ENCODE measurements at regions of chr3 and their contacts with region 1.

Region 1: GRCh38 chr3:149969940-149970715 is 567 bp downstream of the PFN2 start:
- DNase-seq: peak; percentile 75
- ATAC-seq: peak; percentile 27
- H3K4me3 ChIP-seq: peak overlapping the region; percentile 79
- H3K27ac ChIP-seq: peak overlapping the region; percentile 86
- H3K4me1 ChIP-seq: peaks cover 31% of the 10 kb centered on the region
- H3K27me3 ChIP-seq: no peaks in the 10 kb centered on the region
- CTCF ChIP-seq: no peak

Region 2: GRCh38 chr3:150079029-150079739 is 109.1 kb after region 1 on chr3:
- CTCF ChIA-PET with region 1: interaction called, 4 read pairs
- POLR2A ChIA-PET with region 1: interaction called, 3 read pairs
- intact Hi-C with region 1: loop called (anchors 2 kb)
- DNase-seq: peak; percentile 91
- ATAC-seq: peak; percentile 74
- H3K4me3 ChIP-seq: no peak overlapping the region
- H3K27ac ChIP-seq: peak overlapping the region; percentile 84
- H3K4me1 ChIP-seq: peaks cover 59% of the 10 kb centered on the region
- H3K27me3 ChIP-seq: no peaks in the 10 kb centered on the region
- CTCF ChIP-seq: no peak

Region 3: GRCh38 chr3:150202711-150203110 is 232.6 kb after region 1 on chr3:
- CTCF ChIA-PET with region 1: no interaction called
- POLR2A ChIA-PET with region 1: no interaction called
- intact Hi-C with region 1: no loop called
- DNase-seq: no peak
- ATAC-seq: no peak
- H3K4me3 ChIP-seq: no peak overlapping the region
- H3K27ac ChIP-seq: no peak overlapping the region
- H3K4me1 ChIP-seq: no peaks in the 10 kb centered on the region
- H3K27me3 ChIP-seq: no peaks in the 10 kb centered on the region
- CTCF ChIP-seq: no peak

Region 4: DNA sequence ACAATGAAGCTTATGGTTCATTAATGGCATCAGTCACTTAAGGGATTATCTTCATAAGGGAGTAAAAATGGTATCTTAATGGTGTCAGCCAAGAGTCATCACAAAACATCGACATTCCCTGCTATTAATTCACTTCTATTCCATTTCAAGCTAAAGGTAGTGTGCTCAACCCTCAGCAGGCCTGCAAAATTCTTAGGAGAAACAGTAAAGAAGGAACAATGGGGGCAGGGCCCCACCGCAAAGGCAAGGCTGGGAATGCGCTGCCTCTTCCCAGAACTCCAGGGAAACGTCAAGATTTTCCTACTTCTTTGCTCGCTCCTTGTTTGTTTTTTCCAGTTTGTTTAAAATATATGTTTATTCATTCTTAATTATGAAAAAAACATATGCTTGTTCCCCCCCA is 250.7 kb after region 1 on chr3:
- CTCF ChIA-PET with region 1: interaction called, 4 read pairs
- POLR2A ChIA-PET with region 1: no interaction called
- intact Hi-C with region 1: loop called (anchors 1 kb)
- DNase-seq: no peak
- ATAC-seq: peak; percentile 22; the same call in 1 of the 2 replicates
- H3K4me3 ChIP-seq: peak overlapping the region; percentile 44; the same call in 1 of the 2 replicates
- H3K27ac ChIP-seq: no peak overlapping the region
- H3K4me1 ChIP-seq: 0 out of 2 replicates have a peak, but pooled peaks cover 3% of the 10 kb centered on the region
- H3K27me3 ChIP-seq: no peaks in the 10 kb centered on the region
- CTCF ChIP-seq: no peak

Region 5: DNA sequence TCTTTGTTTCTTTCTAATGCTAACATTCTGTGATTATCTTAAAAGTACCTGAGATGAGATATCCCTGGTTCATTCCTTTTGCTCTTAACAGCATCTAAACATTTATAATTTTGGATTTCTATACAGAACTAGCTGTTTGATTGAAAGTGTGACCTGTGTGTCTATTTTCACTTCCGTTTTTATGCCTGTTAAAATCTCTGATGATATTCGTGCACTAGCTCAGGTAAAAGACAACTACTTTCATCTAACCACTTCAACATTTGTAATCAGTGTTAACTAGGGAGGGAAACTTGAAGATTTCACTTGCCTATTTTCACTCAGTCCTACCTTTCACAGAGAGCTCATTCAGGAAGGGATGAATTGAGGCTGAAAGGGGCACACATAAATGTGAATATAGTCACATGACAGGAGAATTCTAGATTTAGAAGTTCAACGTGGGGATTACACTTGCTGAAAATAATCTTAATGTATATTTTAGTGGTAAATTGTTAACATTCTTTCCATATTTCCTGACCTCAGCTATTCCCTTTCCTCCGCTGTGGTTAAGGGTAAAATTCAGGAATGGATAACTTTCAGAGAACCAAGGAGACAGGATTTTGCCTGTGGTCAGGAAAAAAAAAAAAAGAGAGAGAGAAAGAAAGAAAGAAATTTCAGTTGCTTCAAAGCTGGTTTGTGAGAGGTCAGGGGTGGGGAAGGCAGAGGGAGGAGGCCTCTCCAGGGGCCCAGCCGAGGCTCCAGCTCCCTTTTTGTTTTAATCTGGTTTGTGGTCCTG is 278.2 kb after region 1 on chr3:
- CTCF ChIA-PET with region 1: no interaction called
- POLR2A ChIA-PET with region 1: no interaction called
- intact Hi-C with region 1: no loop called
- DNase-seq: peak; percentile 60
- ATAC-seq: no peak
- H3K4me3 ChIP-seq: no peak overlapping the region
- H3K27ac ChIP-seq: 0 out of 2 replicates have a peak overlapping the region, but pooled peaks have one; percentile 7
- H3K4me1 ChIP-seq: peaks cover 38% of the 10 kb centered on the region
- H3K27me3 ChIP-seq: no peaks in the 10 kb centered on the region
- CTCF ChIP-seq: no peak

Region 6: GRCh38 chr3:150371741-150372254 is 401.7 kb after region 1 on chr3:
- CTCF ChIA-PET with region 1: no interaction called
- POLR2A ChIA-PET with region 1: no interaction called
- intact Hi-C with region 1: loop called (anchors 2 kb)
- DNase-seq: peak; percentile 100
- ATAC-seq: peak; percentile 69
- H3K4me3 ChIP-seq: peak overlapping the region; percentile 63
- H3K27ac ChIP-seq: peak overlapping the region; percentile 84
- H3K4me1 ChIP-seq: peaks cover 49% of the 10 kb centered on the region
- H3K27me3 ChIP-seq: no peaks in the 10 kb centered on the region
- CTCF ChIP-seq: no peak

Region 7: DNA sequence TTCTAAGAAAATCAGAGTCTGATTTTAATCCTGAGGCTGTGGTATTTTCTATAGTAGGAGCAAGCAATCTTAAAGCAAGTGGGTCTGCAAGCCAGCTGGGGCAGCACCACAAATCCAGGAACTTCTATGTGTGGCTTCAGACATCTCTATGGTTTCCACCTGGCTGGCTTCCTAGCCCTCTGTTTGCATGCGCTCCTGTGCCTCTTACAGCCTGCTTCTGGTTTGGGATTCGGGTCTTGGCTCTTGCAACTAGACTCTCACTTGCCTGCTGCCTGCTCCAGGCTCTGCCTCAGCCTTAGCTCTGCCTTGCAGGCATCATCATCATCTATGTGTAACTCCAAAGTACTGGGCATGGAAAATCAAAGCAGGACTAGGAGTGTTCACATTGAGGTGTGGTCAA is 891.7 kb after region 1 on chr3:
- CTCF ChIA-PET with region 1: no interaction called
- POLR2A ChIA-PET with region 1: interaction called, 13 read pairs
- intact Hi-C with region 1: no loop called
- DNase-seq: no peak
- ATAC-seq: no peak
- H3K4me3 ChIP-seq: no peak overlapping the region
- H3K27ac ChIP-seq: no peak overlapping the region
- H3K4me1 ChIP-seq: no peaks in the 10 kb centered on the region
- H3K27me3 ChIP-seq: 0 out of 2 replicates have a peak, but pooled peaks cover 5% of the 10 kb centered on the region
- CTCF ChIP-seq: no peak

Measured in PC-3 (cell line).